Dendritic cell treated with granulocyte-macrophage colony-stimulating factor and Interleukin-4, amounts not matched to agents 40 ng/mL and 50 ng/mL, for 4 days (primary cell): ENCODE measurements at regions of chr5 and their contacts with region 1.

Region 1: DNA sequence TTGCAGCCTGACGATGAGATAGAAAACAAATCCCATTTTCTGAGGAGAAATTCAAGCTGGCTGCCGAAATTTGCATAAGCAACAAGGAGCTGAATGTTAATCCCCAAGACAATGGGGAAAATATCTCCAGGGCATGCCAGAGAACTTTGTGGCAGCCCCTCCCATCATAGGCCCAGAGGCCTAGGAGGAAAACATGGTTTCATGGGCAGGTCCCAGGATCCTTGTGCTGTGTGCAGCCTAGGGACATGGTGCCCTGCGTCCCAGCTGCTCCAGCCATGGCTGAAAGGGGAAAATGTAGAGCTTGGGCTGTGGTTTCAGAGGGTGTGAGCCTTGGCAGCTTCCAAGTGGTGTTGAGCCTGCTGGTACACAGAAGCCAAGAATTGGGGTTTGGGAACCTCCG is 48.8 kb upstream of the MAN2A1 start:
- H3K4me3 Mint-ChIP-seq: no peak overlapping the region
- H3K27ac Mint-ChIP-seq: no peak overlapping the region
- H3K4me1 Mint-ChIP-seq: peaks cover 28% of the 10 kb centered on the region
- H3K27me3 Mint-ChIP-seq: peaks cover 5% of the 10 kb centered on the region

Region 2: GRCh38 chr5:109619606-109620005 is 21.4 kb before region 1 on chr5:
- intact Hi-C with region 1: loop called (anchors 2 kb)
- H3K4me3 Mint-ChIP-seq: no peak overlapping the region
- H3K27ac Mint-ChIP-seq: no peak overlapping the region
- H3K4me1 Mint-ChIP-seq: peaks cover 16% of the 10 kb centered on the region
- H3K27me3 Mint-ChIP-seq: peaks cover 1% of the 10 kb centered on the region